ENCODE measurements at regions of chr20 and their contacts with region 1.

Region 1: GRCh38 chr20:39632176-39632575 is 670.0 kb downstream of the DHX35 start:
- DNase-seq: no peak

Region 2: DNA sequence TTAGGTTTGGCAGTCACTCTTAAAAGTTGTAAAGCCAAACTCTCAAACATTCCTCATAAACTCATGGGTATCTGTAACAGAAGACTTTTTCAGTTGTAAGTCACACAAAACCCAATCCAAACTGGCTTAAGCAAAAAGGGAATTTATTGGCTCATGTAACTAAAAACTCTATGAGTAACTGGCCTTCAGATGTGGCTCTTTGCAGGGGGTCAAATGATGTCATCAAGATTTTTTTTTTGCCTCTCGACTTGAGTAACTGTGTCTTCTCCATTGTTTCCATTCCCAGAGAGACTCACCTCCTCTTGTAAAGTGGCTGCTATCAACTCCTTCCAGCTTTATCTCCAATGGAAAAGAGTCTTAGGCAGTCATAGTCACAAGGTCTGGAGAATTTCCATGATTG is 25.0 kb before region 1 on chr20:
- intact Hi-C with region 1: loop called (anchors 2 kb)
- DNase-seq: no peak

Region 3: GRCh38 chr20:39745380-39745779 is 113.2 kb after region 1 on chr20:
- intact Hi-C with region 1: no loop called
- DNase-seq: no peak

Region 4: DNA sequence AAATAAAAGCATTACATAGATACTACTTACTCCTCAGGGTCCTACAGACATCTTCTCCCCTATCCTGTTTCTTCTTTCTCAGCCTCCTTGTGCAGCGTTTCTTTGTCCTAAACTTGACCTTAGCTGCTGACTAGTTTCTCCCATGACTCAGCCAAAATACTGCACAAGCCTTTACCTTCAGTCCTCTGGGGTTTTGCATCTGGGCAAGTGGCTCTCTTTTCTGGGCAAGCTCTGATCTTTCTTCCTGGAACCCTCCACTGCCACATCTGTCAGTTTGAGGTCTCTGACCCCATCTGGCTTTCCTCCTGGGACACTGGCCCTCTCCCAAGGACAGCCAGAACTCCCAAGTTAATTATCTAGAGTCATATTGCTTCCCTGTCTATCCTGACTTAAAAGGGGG is 168.4 kb after region 1 on chr20:
- intact Hi-C with region 1: no loop called
- DNase-seq: no peak